ENCODE measurements at regions of chr12 and their contacts with region 1.

Region 1: DNA sequence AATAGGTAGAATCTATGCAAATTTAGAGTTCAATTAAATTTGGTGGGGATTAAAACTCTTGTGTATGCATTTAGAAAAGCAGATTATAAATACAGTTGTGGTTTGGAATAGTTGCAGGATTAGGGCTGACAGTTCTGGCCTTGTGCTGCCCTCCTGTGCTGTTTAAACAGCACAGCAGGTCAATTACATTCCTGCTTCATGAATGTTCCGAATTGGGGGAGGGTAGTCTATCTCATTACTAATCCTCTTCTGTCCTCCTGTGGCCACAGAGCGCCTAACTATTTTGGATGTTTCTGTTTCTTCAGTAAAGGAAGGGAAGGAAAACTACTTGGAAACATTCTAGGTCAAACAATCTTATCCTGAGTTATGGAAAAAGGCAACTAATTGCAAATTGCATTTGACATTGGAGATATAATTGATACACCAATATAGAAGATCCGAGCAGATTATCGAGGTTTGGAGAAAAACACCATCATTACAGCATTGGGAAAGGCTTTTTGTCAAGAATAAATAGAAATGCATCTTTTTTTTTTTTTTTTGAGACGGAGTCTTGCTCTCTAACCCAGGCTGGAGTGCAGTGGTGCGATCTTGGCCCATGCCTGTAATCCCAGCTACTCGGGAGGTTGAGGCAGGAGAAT is 8.7 kb upstream of the GPR19 start:
- DNase-seq: peak; percentile 92 to 95 (median 95)
- H3K4me3 ChIP-seq: no peak overlapping the region
- H3K27ac ChIP-seq: no peak overlapping the region
- H3K4me1 ChIP-seq: peaks cover 25 to 41% (median 34%) of the 10 kb centered on the region in 4 experiments
- H3K27me3 ChIP-seq: no peaks in the 10 kb centered on the region

Region 2: GRCh38 chr12:12645485-12645884 is 59.2 kb before region 1 on chr12:
- CTCF ChIA-PET with region 1: interaction called, 15 read pairs
- POLR2A ChIA-PET with region 1: no interaction called
- DNase-seq: peak; percentile 57 to 75 (median 74)
- H3K4me3 ChIP-seq: no peak overlapping the region
- H3K27ac ChIP-seq: no peak overlapping the region
- H3K4me1 ChIP-seq: no peaks in the 10 kb centered on the region
- H3K27me3 ChIP-seq: no peaks in the 10 kb centered on the region

Region 3: GRCh38 chr12:12716793-12717585 is 12.3 kb after region 1 on chr12 and contains the start of gene CDKN1B:
- CTCF ChIA-PET with region 1: interaction called, 21 read pairs
- POLR2A ChIA-PET with region 1: interaction called, 3 read pairs
- DNase-seq: peak; percentile 90 to 97 (median 94)
- H3K4me3 ChIP-seq: peak within 1 kb of the TSS; percentile 97 to 100 (median 100)
- H3K27ac ChIP-seq: peak within 1 kb of the TSS; percentile 87 to 97
- H3K4me1 ChIP-seq: peaks cover 46 to 73% (median 54%) of the 10 kb centered on the region in 4 experiments
- H3K27me3 ChIP-seq: no peaks in the 10 kb centered on the region